Breast epithelium (tissue), 4 donors: ENCODE measurements at regions of chr3 and their contacts with region 1.

Region 1: DNA sequence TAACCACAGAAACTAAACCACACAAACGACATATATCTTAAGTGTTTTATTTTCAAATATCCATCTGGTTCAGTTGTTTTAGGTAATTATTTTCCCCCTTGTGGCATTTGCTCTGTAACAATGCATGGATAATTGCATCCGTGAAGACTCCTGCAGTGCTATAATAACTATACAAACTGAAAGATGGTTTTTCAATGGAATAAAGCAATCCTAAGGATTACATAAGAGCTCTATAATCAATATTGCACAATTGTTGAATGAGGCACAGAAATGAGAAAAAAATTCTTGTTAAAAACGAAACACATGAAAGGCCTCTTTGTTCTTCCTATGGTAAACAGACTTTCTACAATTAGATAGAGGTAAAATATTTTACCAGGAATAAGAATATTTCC is 446.0 kb upstream of the EPHA3 start:
- DNase-seq: no peak
- H3K4me3 ChIP-seq: no peak overlapping the region
- H3K27ac ChIP-seq: no peak overlapping the region
- H3K4me1 ChIP-seq: no peaks in the 10 kb centered on the region
- H3K27me3 ChIP-seq: no peaks in the 10 kb centered on the region
- CTCF ChIP-seq: no peak
- POLR2A ChIP-seq: no peak

Region 2: GRCh38 chr3:89494734-89495133 is 833.3 kb after region 1 on chr3:
- intact Hi-C with region 1: loop called (anchors 5 kb)
- DNase-seq: no peak
- H3K4me3 ChIP-seq: no peak overlapping the region
- H3K27ac ChIP-seq: no peak overlapping the region
- H3K4me1 ChIP-seq: no peaks in the 10 kb centered on the region
- H3K27me3 ChIP-seq: no peaks in the 10 kb centered on the region
- CTCF ChIP-seq: no peak
- POLR2A ChIP-seq: no peak